Activated T-helper 2 cell treated with anti-CD3 and anti-CD28 coated beads, Interferon-gamma antibody, Interleukin-2, Interleukin-4, amounts not matched to agents 10 μg/mL and 5 μg/mL and 100 μg/mL, durations not matched to agents 14 hours and 24 hours and 36 hours (primary cell): ENCODE measurements at regions of chr3 and their contacts with region 1.

Region 1: DNA sequence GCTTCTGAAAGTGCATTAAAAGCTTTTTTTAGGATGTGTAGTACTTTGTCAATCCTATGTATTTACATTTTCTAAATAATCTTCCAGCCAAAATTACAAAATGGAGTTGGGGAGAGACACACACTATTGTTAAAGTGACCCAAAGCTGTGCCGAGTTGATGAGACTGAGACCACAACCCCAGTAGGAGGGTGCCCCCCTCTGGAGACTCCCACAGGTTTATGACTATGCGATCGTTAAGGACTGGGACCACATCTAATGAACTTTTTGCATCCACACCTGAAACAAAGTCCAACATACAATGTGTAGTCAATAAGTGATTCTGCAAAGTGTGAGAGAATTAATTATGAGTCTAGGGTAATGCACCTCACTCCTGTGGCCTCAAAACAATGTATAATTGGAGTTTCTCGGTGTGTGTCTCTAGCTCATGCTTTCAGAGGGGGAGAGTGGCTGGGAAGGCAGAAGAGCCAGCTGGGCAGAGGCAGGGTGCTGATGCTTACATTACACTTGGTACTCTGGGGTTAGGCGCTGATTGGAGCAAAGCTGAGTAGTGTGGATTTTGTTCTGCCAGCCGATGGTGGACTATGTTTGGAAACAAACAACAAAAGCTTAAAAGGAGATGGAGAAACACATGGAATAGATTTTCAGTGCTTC is 102.8 kb downstream of the KCNH8 start:
- DNase-seq: no peak
- H3K4me3 Mint-ChIP-seq: no peak overlapping the region
- H3K27ac Mint-ChIP-seq: no peak overlapping the region
- H3K4me1 Mint-ChIP-seq: peaks cover 8% of the 10 kb centered on the region
- H3K27me3 Mint-ChIP-seq: no peaks in the 10 kb centered on the region

Region 2: GRCh38 chr3:19074257-19074900 is 176.7 kb before region 1 on chr3:
- intact Hi-C with region 1: loop called (anchors 10 kb)
- DNase-seq: no peak
- H3K4me3 Mint-ChIP-seq: no peak overlapping the region
- H3K27ac Mint-ChIP-seq: no peak overlapping the region
- H3K4me1 Mint-ChIP-seq: no peaks in the 10 kb centered on the region
- H3K27me3 Mint-ChIP-seq: peaks cover 2% of the 10 kb centered on the region

Region 3: GRCh38 chr3:19267040-19267439 is 16.0 kb after region 1 on chr3:
- intact Hi-C with region 1: no loop called
- DNase-seq: no peak
- H3K4me3 Mint-ChIP-seq: no peak overlapping the region
- H3K27ac Mint-ChIP-seq: no peak overlapping the region
- H3K4me1 Mint-ChIP-seq: no peaks in the 10 kb centered on the region
- H3K27me3 Mint-ChIP-seq: no peaks in the 10 kb centered on the region

Region 4: DNA sequence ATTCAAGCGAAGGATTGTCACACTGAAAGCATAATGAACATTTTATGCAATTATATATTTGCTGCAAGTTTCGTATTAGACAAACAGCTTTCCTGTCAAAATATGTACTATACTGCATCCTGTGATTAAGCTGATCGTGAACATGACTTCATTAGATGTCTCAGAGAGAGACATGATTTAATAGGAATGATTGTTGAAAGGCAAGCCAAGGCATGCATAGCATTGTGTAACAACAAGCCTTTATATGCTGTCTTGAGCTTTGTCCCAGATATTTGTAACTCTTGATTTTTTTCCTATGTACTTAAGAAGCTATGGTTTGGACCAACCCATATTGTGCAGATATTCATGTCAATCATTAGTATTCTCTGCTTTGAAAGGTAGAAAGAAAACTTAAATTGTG is 206.4 kb after region 1 on chr3:
- intact Hi-C with region 1: no loop called
- DNase-seq: no peak
- H3K4me3 Mint-ChIP-seq: no peak overlapping the region
- H3K27ac Mint-ChIP-seq: no peak overlapping the region
- H3K4me1 Mint-ChIP-seq: no peaks in the 10 kb centered on the region
- H3K27me3 Mint-ChIP-seq: no peaks in the 10 kb centered on the region